ENCODE measurements at regions of chr12 and their contacts with region 1.

Region 1: GRCh38 chr12:117367011-117367638 is 5.7 kb upstream of the NOS1 start:
- DNase-seq: peak; percentile 91
- ATAC-seq: peak; percentile 86
- H3K4me3 Mint-ChIP-seq: no peak overlapping the region
- H3K27ac Mint-ChIP-seq: no peak overlapping the region
- H3K4me1 Mint-ChIP-seq: peaks cover 10% of the 10 kb centered on the region
- H3K27me3 Mint-ChIP-seq: peaks cover 34% of the 10 kb centered on the region
- CTCF ChIP-seq: peak; percentile 96

Region 2: DNA sequence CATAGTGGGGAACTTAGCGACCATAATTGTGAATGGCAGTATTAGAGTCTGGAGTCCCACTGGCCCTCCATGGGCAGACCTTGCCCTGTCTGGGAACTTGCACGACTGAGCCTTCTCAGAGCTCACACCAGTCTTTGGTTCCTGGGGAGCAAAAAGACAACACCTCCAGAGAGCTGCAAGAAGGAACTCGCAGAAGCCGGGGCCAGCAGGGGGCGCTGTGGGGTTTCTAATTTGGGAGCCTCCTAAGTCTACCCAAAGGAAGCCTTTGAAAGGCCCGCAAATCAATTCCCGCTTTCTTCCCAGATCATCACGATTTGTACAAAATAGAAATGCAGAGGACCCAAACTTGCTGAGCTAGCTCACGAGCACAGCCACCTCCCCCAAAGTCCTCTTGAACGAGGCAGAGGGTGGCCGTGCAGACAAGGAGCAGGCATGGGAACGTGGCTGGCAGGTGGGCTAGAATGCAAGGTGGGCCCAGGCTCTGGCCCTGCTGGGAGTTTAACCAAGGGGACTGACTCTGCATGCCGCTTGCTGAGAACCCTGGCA is 130.6 kb before region 1 on chr12:
- CTCF ChIA-PET with region 1: interaction called, 39 read pairs
- POLR2A ChIA-PET with region 1: no interaction called
- DNase-seq: peak; percentile 99
- ATAC-seq: peak; percentile 80
- H3K4me3 Mint-ChIP-seq: no peak overlapping the region
- H3K27ac Mint-ChIP-seq: 0 out of 2 replicates have a peak overlapping the region, but pooled peaks have one; percentile 19
- H3K4me1 Mint-ChIP-seq: peaks cover 24% of the 10 kb centered on the region
- H3K27me3 Mint-ChIP-seq: no peaks in the 10 kb centered on the region
- CTCF ChIP-seq: peak; percentile 88

Region 3: DNA sequence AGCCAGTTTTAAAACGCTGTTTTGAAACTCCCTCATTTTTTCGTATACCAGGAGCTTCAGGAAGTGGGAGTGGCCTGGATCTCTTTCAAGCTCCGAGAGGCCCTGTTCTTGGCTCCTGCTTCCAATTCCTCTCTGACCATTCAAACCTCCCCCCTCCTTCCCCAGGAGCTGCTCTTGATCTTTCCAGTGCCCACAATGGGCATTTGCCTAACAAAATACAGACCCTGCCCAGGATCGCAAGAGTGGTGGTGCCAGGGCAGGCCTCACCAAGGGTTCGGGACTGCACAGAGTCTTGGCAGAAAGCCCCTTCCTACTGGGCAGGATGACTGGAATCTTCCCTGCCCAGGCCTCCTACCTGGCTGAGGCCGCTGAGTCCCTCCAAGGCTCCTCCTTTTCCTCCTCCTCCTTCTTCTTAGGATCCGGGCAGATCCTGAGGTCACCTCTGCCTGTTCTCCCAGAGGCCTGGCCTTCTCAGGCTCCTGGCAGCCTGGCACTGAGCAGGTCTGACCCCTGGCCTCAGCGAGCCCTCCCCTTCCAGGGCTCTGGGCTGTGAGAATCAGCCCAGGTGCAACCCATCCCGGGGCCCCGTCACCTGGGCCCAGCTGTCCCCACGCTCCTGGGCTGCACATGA is 41.2 kb after region 1 on chr12:
- CTCF ChIA-PET with region 1: interaction called, 24 read pairs
- POLR2A ChIA-PET with region 1: no interaction called
- DNase-seq: no peak
- ATAC-seq: peak; percentile 83
- H3K4me3 Mint-ChIP-seq: no peak overlapping the region; the same call in 1 of the 2 replicates
- H3K27ac Mint-ChIP-seq: peak overlapping the region; percentile 60; the same call in 1 of the 2 replicates
- H3K4me1 Mint-ChIP-seq: peaks cover 15% of the 10 kb centered on the region
- H3K27me3 Mint-ChIP-seq: no peaks in the 10 kb centered on the region; the same call in 1 of the 2 replicates
- CTCF ChIP-seq: no peak

Region 4: DNA sequence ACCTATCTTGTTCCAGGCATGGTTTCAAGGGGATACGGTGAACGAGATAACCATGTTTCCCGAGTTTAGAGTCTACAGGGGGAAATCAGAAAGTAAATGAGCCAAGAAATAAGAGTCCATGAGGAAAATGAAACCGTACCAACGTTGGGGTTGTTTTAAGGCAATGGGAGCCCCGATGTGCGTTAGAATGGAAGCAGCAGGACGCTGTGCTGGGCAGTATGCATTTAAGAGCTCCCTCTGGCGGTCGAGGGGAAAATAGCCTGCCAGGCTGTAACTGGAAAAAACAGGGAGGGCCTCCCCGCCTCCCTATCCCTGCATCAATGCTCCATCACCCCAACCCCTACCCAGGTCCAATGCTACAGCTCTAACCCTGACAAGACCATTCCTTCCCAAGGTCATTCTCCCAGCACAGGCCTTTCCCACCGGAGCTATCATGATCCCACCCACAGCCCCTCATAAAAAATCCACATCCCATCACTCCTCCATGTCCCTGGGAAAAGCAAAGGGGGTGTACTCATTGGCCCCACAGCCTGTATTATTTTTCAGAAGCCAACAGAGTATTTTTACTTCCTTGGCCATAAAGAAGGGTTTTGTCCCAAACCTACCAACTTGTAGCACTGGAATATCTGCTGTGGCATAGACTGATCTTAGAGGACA is 220.6 kb after region 1 on chr12:
- CTCF ChIA-PET with region 1: interaction called, 79 read pairs
- POLR2A ChIA-PET with region 1: no interaction called
- DNase-seq: peak; percentile 81
- ATAC-seq: peak; percentile 86
- H3K4me3 Mint-ChIP-seq: no peak overlapping the region
- H3K27ac Mint-ChIP-seq: no peak overlapping the region
- H3K4me1 Mint-ChIP-seq: peaks cover 39% of the 10 kb centered on the region
- H3K27me3 Mint-ChIP-seq: no peaks in the 10 kb centered on the region
- CTCF ChIP-seq: peak; percentile 91

Region 5: DNA sequence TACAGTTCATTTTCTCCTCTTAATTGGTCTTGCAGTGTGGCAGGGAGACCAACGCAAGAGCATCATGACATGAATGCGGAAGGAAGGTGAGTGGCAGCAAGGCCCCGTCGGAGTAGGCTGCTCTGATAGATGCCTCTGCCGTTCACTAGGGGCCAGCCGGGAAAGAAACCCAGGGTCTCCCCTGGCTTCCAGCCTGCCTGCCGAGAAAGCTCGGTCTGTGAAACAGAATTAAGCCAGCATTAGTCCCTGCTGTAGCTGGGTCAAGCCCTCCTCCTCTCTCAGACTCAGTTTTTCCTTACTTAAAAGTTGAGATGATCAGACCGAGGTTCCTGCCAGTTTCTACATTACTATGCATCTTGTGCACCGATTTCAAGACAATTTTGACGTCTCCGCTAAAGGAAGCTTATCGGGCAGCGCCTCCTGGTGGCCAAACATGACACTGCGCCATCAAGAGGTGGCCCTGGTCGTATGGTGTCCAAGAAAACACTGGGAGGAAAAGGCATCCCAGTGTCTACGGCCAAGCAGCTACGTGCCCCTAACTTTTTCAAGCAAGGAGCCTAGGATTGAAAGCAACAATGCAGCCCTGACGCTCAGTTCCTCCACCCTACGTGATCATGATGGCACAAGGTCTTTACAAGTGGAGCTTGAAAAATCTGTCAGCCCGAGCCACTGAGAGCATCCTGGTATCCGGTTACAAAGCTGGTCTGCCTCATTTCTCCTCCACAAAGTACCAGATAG is 470.0 kb after region 1 on chr12:
- CTCF ChIA-PET with region 1: interaction called, 35 read pairs
- POLR2A ChIA-PET with region 1: interaction called, 4 read pairs
- DNase-seq: peak; percentile 92
- ATAC-seq: peak; percentile 88
- H3K4me3 Mint-ChIP-seq: 0 out of 2 replicates have a peak overlapping the region, but pooled peaks have one; percentile 14
- H3K27ac Mint-ChIP-seq: no peak overlapping the region; the same call in 1 of the 2 replicates
- H3K4me1 Mint-ChIP-seq: peaks cover 27% of the 10 kb centered on the region
- H3K27me3 Mint-ChIP-seq: no peaks in the 10 kb centered on the region
- CTCF ChIP-seq: peak; percentile 99

Measured in WTC11 (cell line).